B cell (primary cell): ENCODE measurements at regions of chr15 and their contacts with region 1.

Region 1: DNA sequence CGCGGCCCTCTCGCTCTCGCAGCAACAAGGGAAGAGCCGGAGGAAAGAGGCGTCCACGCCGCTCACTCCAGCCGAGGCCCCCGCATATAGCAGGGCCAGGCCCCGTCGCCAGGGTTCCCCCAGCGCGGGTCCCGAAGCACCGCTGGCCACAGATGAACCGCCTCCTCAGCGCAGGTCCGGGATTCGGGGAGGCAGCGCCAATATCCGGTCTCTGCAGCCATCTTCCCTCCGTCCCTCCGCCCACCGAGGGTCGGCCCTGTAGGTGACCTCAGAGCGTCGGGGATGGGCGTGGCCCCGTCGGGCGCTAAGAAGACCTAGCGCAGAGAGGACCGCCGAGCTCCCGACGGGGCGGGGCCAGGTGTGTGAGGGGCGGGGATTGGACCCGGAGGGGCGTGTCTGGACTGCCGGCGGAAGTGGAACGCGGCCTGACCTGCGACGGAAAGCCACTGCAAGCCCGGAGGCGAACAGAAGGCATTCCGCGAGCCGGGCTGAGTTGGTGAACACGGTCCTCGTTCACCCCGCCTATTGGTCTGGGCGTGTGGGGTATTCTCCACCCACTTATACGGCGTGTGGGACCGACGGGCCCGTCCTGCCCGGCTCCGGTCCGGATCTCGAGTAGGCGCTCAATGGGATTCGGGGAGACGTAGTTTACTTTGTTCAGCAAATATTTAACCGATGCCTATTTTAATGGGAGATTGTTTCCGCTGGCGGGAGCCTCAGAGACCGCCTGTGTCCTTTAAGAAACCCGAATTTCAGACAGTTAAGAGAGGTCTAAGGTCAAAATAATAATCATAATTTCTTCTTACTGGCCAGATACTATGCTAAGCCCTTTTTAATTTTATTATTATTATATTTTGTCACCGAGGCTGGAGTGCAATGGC is 26.9 kb upstream of the MTHFS start:
- DNase-seq: peak; percentile 99
- ATAC-seq: peak; percentile 96
- H3K4me3 ChIP-seq: peak overlapping the region; percentile 77 to 100 (median 97)
- H3K4me3 Mint-ChIP-seq: peak overlapping the region; percentile 96
- H3K27ac ChIP-seq: peak overlapping the region; percentile 95 to 97
- H3K27ac Mint-ChIP-seq: peak overlapping the region; percentile 97
- H3K4me1 ChIP-seq: peaks cover 14 to 15% of the 10 kb centered on the region in 2 donors
- H3K4me1 Mint-ChIP-seq: peaks cover 30% of the 10 kb centered on the region
- H3K27me3 ChIP-seq: no peaks in the 10 kb centered on the region
- H3K27me3 Mint-ChIP-seq: no peaks in the 10 kb centered on the region
- CTCF ChIP-seq: no peak

Region 2: GRCh38 chr15:79896637-79897379 is 26.9 kb before region 1 on chr15 and contains the start of gene MTHFS:
- CTCF ChIA-PET with region 1: interaction called, 6 read pairs
- POLR2A ChIA-PET with region 1: interaction called, 35 read pairs
- intact Hi-C with region 1: loop called (anchors 1 kb)
- DNase-seq: peak; percentile 93
- ATAC-seq: peak; percentile 92
- H3K4me3 ChIP-seq: peak within 1 kb of the TSS; percentile 71 to 85 (median 79)
- H3K4me3 Mint-ChIP-seq: peak within 1 kb of the TSS; percentile 97
- H3K27ac ChIP-seq: peak within 1 kb of the TSS; percentile 90 to 98
- H3K27ac Mint-ChIP-seq: peak within 1 kb of the TSS; percentile 98
- H3K4me1 ChIP-seq: peaks cover 23 to 32% of the 10 kb centered on the region in 2 donors
- H3K4me1 Mint-ChIP-seq: peaks cover 40% of the 10 kb centered on the region
- H3K27me3 ChIP-seq: no peaks in the 10 kb centered on the region
- H3K27me3 Mint-ChIP-seq: no peaks in the 10 kb centered on the region
- CTCF ChIP-seq: peak; percentile 68
- total RNA-seq, gene MTHFS: 20.1 and 24.4 TPM in 2 replicates

Region 3: GRCh38 chr15:79939396-79939795 is 15.6 kb after region 1 on chr15:
- CTCF ChIA-PET with region 1: no interaction called
- POLR2A ChIA-PET with region 1: no interaction called
- intact Hi-C with region 1: no loop called
- DNase-seq: no peak
- ATAC-seq: no peak
- H3K4me3 ChIP-seq: no peak overlapping the region
- H3K4me3 Mint-ChIP-seq: no peak overlapping the region
- H3K27ac ChIP-seq: no peak overlapping the region
- H3K27ac Mint-ChIP-seq: no peak overlapping the region
- H3K4me1 ChIP-seq: no peaks in the 10 kb centered on the region
- H3K4me1 Mint-ChIP-seq: no peaks in the 10 kb centered on the region
- H3K27me3 ChIP-seq: no peaks in the 10 kb centered on the region
- H3K27me3 Mint-ChIP-seq: peaks cover 6% of the 10 kb centered on the region
- CTCF ChIP-seq: no peak

Region 4: GRCh38 chr15:79970624-79971434 is 47.1 kb after region 1 on chr15 and contains the start of gene BCL2A1:
- CTCF ChIA-PET with region 1: no interaction called
- POLR2A ChIA-PET with region 1: interaction called, 7 read pairs
- intact Hi-C with region 1: loop called (anchors 1 kb)
- DNase-seq: peak; percentile 92
- ATAC-seq: peak; percentile 85
- H3K4me3 ChIP-seq: peak within 1 kb of the TSS; percentile 33 to 88 (median 57)
- H3K4me3 Mint-ChIP-seq: peak within 1 kb of the TSS; percentile 91
- H3K27ac ChIP-seq: peak within 1 kb of the TSS; percentile 75 to 79
- H3K27ac Mint-ChIP-seq: peak within 1 kb of the TSS; percentile 90
- H3K4me1 ChIP-seq: peaks cover 53 to 64% of the 10 kb centered on the region in 2 donors
- H3K4me1 Mint-ChIP-seq: peaks cover 60% of the 10 kb centered on the region
- H3K27me3 ChIP-seq: no peaks in the 10 kb centered on the region
- H3K27me3 Mint-ChIP-seq: no peaks in the 10 kb centered on the region
- CTCF ChIP-seq: no peak
- total RNA-seq, gene BCL2A1: 32.9 and 33.8 TPM in 2 replicates

Region 5: GRCh38 chr15:79989682-79990081 is 65.9 kb after region 1 on chr15:
- CTCF ChIA-PET with region 1: interaction called, 5 read pairs
- POLR2A ChIA-PET with region 1: interaction called, 5 read pairs
- intact Hi-C with region 1: loop called (anchors 1 kb)
- DNase-seq: no peak
- ATAC-seq: no peak
- H3K4me3 ChIP-seq: no peak overlapping the region
- H3K4me3 Mint-ChIP-seq: no peak overlapping the region
- H3K27ac ChIP-seq: no peak overlapping the region
- H3K27ac Mint-ChIP-seq: no peak overlapping the region
- H3K4me1 ChIP-seq: peaks cover 0 to 5% of the 10 kb centered on the region in 2 donors
- H3K4me1 Mint-ChIP-seq: peaks cover 19% of the 10 kb centered on the region
- H3K27me3 ChIP-seq: peaks cover 0 to 12% (median 1%) of the 10 kb centered on the region in 4 experiments
- H3K27me3 Mint-ChIP-seq: peaks cover 5% of the 10 kb centered on the region
- CTCF ChIP-seq: no peak

Region 6: GRCh38 chr15:80002267-80002666 is 78.5 kb after region 1 on chr15:
- CTCF ChIA-PET with region 1: no interaction called
- POLR2A ChIA-PET with region 1: no interaction called
- intact Hi-C with region 1: no loop called
- DNase-seq: no peak
- ATAC-seq: no peak
- H3K4me3 ChIP-seq: no peak overlapping the region
- H3K4me3 Mint-ChIP-seq: no peak overlapping the region
- H3K27ac ChIP-seq: no peak overlapping the region
- H3K27ac Mint-ChIP-seq: no peak overlapping the region
- H3K4me1 ChIP-seq: no peaks in the 10 kb centered on the region
- H3K4me1 Mint-ChIP-seq: peaks cover 8% of the 10 kb centered on the region
- H3K27me3 ChIP-seq: no peaks in the 10 kb centered on the region
- H3K27me3 Mint-ChIP-seq: no peaks in the 10 kb centered on the region
- CTCF ChIP-seq: no peak

Region 7: GRCh38 chr15:80058851-80059785 is 135.4 kb after region 1 on chr15 and contains the start of gene ZFAND6:
- CTCF ChIA-PET with region 1: interaction called, 9 read pairs
- POLR2A ChIA-PET with region 1: interaction called, 8 read pairs
- intact Hi-C with region 1: loop called (anchors 1 kb)
- DNase-seq: peak; percentile 97
- ATAC-seq: peak; percentile 83
- H3K4me3 ChIP-seq: peak within 1 kb of the TSS; percentile 78 to 93 (median 85)
- H3K4me3 Mint-ChIP-seq: peak within 1 kb of the TSS; percentile 95
- H3K27ac ChIP-seq: peak within 1 kb of the TSS; percentile 87 to 96
- H3K27ac Mint-ChIP-seq: peak within 1 kb of the TSS; percentile 99
- H3K4me1 ChIP-seq: peaks cover 27 to 35% of the 10 kb centered on the region in 2 donors
- H3K4me1 Mint-ChIP-seq: peaks cover 52% of the 10 kb centered on the region
- H3K27me3 ChIP-seq: no peaks in the 10 kb centered on the region
- H3K27me3 Mint-ChIP-seq: no peaks in the 10 kb centered on the region
- CTCF ChIP-seq: peak; percentile 18
- total RNA-seq, gene ZFAND6: 133 and 144 TPM in 2 replicates